CD4-positive, alpha-beta T cell (primary cell): ENCODE measurements at regions of chr12 and their contacts with region 1.

Region 1: GRCh38 chr12:42306297-42306696 is 19.6 kb downstream of the ZCRB1 start:
- DNase-seq: no peak
- ATAC-seq: no peak
- H3K4me3 ChIP-seq: no peak overlapping the region
- H3K4me3 Mint-ChIP-seq: no peak overlapping the region
- H3K27ac ChIP-seq: no peak overlapping the region
- H3K27ac Mint-ChIP-seq: no peak overlapping the region
- H3K4me1 ChIP-seq: no peaks in the 10 kb centered on the region
- H3K4me1 Mint-ChIP-seq: no peaks in the 10 kb centered on the region
- H3K27me3 ChIP-seq: no peaks in the 10 kb centered on the region
- H3K27me3 Mint-ChIP-seq: no peaks in the 10 kb centered on the region
- CTCF ChIP-seq: no peak

Region 2: GRCh38 chr12:42059127-42059526 is 247.2 kb before region 1 on chr12:
- CTCF ChIA-PET with region 1: no interaction called
- POLR2A ChIA-PET with region 1: no interaction called
- intact Hi-C with region 1: no loop called
- DNase-seq: no peak
- ATAC-seq: no peak
- H3K4me3 ChIP-seq: no peak overlapping the region
- H3K4me3 Mint-ChIP-seq: no peak overlapping the region
- H3K27ac ChIP-seq: no peak overlapping the region
- H3K27ac Mint-ChIP-seq: no peak overlapping the region
- H3K4me1 ChIP-seq: no peaks in the 10 kb centered on the region
- H3K4me1 Mint-ChIP-seq: no peaks in the 10 kb centered on the region
- H3K27me3 ChIP-seq: peaks cover 3 to 5% of the 10 kb centered on the region in 2 experiments
- H3K27me3 Mint-ChIP-seq: peaks cover 29% of the 10 kb centered on the region
- CTCF ChIP-seq: no peak

Region 3: GRCh38 chr12:42267455-42268190 is 38.7 kb before region 1 on chr12:
- CTCF ChIA-PET with region 1: no interaction called
- POLR2A ChIA-PET with region 1: no interaction called
- intact Hi-C with region 1: loop called in 1 of 2 experiments (anchors 1 kb)
- DNase-seq: no peak
- ATAC-seq: no peak
- H3K4me3 ChIP-seq: no peak overlapping the region
- H3K4me3 Mint-ChIP-seq: no peak overlapping the region
- H3K27ac ChIP-seq: no peak overlapping the region
- H3K27ac Mint-ChIP-seq: no peak overlapping the region
- H3K4me1 ChIP-seq: no peaks in the 10 kb centered on the region
- H3K4me1 Mint-ChIP-seq: peaks cover 5% of the 10 kb centered on the region
- H3K27me3 ChIP-seq: peaks cover 0 to 2% of the 10 kb centered on the region in 2 experiments
- H3K27me3 Mint-ChIP-seq: peaks cover 7% of the 10 kb centered on the region
- CTCF ChIP-seq: no peak

Region 4: GRCh38 chr12:42284157-42284556 is 22.1 kb before region 1 on chr12:
- CTCF ChIA-PET with region 1: no interaction called
- POLR2A ChIA-PET with region 1: no interaction called
- intact Hi-C with region 1: no loop called
- DNase-seq: no peak
- ATAC-seq: no peak
- H3K4me3 ChIP-seq: no peak overlapping the region
- H3K4me3 Mint-ChIP-seq: no peak overlapping the region
- H3K27ac ChIP-seq: no peak overlapping the region
- H3K27ac Mint-ChIP-seq: no peak overlapping the region
- H3K4me1 ChIP-seq: no peaks in the 10 kb centered on the region
- H3K4me1 Mint-ChIP-seq: peaks cover 8% of the 10 kb centered on the region
- H3K27me3 ChIP-seq: peaks cover 0 to 6% of the 10 kb centered on the region in 2 experiments
- H3K27me3 Mint-ChIP-seq: peaks cover 6% of the 10 kb centered on the region
- CTCF ChIP-seq: no peak

Region 5: GRCh38 chr12:42346403-42347002 is 40.2 kb after region 1 on chr12:
- CTCF ChIA-PET with region 1: no interaction called
- POLR2A ChIA-PET with region 1: no interaction called
- intact Hi-C with region 1: no loop called
- DNase-seq: no peak
- ATAC-seq: no peak
- H3K4me3 ChIP-seq: no peak overlapping the region
- H3K4me3 Mint-ChIP-seq: no peak overlapping the region
- H3K27ac ChIP-seq: no peak overlapping the region
- H3K27ac Mint-ChIP-seq: no peak overlapping the region
- H3K4me1 ChIP-seq: peaks cover 3% of the 10 kb centered on the region
- H3K4me1 Mint-ChIP-seq: peaks cover 38% of the 10 kb centered on the region
- H3K27me3 ChIP-seq: no peaks in the 10 kb centered on the region
- H3K27me3 Mint-ChIP-seq: no peaks in the 10 kb centered on the region
- CTCF ChIP-seq: no peak

Region 6: DNA sequence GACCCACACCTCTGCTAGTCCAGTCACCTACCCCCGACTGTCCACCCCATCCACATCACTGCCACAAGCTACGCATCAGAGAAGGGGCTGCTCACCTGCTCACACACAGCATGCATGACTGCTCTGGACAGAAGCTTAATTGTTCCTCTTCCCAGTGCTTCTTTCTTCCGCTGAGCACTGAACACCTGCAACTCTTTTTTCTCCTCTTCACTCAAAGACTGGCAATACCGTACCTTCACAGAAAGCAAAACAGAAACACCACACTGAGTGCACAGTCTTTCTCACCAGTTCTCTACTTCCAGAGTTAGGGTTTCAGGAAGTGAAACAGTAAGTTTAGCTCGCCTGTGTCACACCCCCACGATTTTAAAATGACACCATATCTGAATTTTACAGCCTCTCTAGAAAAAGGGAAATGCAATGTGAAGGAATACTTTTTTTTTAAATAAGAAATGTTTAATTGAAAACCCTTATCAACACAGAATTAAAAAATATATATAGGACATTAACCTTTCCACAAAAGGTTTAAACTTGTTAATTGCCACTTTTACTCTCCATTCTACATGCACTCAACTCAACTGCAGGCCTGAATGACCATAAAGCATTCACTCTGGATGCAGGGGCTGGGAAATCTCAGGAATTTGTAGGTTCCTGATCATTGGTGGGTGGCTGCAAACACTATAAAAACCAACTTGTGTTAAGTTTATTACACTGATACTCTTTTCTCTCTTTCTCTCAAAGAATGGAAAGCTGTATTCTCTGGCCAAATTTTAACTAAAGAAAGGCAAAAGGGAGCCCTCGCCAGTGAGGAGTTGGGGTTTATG is 163.3 kb after region 1 on chr12:
- CTCF ChIA-PET with region 1: no interaction called
- POLR2A ChIA-PET with region 1: no interaction called
- intact Hi-C with region 1: no loop called
- DNase-seq: peak in 2 of 14 experiments; percentile 30 to 31
- ATAC-seq: no peak
- H3K4me3 ChIP-seq: peak overlapping the region; percentile 19
- H3K4me3 Mint-ChIP-seq: peak overlapping the region; percentile 23
- H3K27ac ChIP-seq: no peak overlapping the region
- H3K27ac Mint-ChIP-seq: no peak overlapping the region
- H3K4me1 ChIP-seq: no peaks in the 10 kb centered on the region
- H3K4me1 Mint-ChIP-seq: peaks cover 21% of the 10 kb centered on the region
- H3K27me3 ChIP-seq: peaks cover 0 to 4% of the 10 kb centered on the region in 2 experiments
- H3K27me3 Mint-ChIP-seq: peaks cover 59% of the 10 kb centered on the region
- CTCF ChIP-seq: no peak